Ascending aorta (tissue), 2 donors: ENCODE measurements at regions of chr1 and their contacts with region 1.

Region 1: DNA sequence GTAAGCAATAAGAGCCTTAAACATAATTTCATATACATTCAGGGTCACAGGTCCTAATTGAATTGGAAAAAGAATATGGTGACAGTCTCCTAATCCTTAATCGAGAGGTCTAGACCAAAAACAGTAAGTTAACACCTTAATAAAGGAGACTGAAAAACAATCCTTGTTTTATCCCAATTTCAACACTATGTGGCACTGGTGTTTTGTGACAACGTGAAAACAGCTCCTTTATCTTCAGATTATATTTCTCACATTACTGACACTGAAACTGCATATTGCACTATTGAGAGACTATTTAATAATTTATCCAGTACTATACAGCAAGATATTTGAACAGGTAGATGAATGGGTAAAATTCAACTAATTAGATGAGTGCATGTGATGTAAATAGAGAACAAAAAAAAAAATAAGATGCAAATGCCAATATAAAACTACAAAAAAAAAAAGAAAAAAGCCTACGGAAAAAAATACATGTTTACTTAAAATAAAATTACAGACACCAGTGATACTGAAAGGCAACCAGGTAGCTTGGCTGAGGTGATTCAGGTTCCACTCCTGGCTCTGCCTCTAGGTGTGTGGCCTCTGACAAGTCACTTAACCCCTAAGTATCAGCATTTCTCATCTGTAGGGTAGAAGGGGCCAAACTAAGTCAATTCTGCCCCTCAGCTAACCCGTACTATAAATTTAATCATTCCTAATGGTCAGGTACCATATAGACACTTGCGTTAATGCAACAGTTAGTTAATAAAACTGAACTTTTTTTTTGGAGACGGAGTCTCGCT is 33.9 kb downstream of the TP53BP2 start:
- DNase-seq: no peak
- H3K4me3 ChIP-seq: no peak overlapping the region
- H3K27ac ChIP-seq: no peak overlapping the region
- H3K4me1 ChIP-seq: peaks cover 0 to 8% of the 10 kb centered on the region in 2 donors
- H3K27me3 ChIP-seq: no peaks in the 10 kb centered on the region
- CTCF ChIP-seq: peak; percentile 37 to 61 (median 57)

Region 2: GRCh38 chr1:223726380-223727001 is 85.3 kb before region 1 on chr1:
- intact Hi-C with region 1: no loop called
- DNase-seq: peak; percentile 57 to 89
- H3K4me3 ChIP-seq: no peak overlapping the region
- H3K27ac ChIP-seq: peak overlapping the region; percentile 69 to 70
- H3K4me1 ChIP-seq: peaks cover 5 to 31% of the 10 kb centered on the region in 2 donors
- H3K27me3 ChIP-seq: no peaks in the 10 kb centered on the region
- CTCF ChIP-seq: no peak

Region 3: DNA sequence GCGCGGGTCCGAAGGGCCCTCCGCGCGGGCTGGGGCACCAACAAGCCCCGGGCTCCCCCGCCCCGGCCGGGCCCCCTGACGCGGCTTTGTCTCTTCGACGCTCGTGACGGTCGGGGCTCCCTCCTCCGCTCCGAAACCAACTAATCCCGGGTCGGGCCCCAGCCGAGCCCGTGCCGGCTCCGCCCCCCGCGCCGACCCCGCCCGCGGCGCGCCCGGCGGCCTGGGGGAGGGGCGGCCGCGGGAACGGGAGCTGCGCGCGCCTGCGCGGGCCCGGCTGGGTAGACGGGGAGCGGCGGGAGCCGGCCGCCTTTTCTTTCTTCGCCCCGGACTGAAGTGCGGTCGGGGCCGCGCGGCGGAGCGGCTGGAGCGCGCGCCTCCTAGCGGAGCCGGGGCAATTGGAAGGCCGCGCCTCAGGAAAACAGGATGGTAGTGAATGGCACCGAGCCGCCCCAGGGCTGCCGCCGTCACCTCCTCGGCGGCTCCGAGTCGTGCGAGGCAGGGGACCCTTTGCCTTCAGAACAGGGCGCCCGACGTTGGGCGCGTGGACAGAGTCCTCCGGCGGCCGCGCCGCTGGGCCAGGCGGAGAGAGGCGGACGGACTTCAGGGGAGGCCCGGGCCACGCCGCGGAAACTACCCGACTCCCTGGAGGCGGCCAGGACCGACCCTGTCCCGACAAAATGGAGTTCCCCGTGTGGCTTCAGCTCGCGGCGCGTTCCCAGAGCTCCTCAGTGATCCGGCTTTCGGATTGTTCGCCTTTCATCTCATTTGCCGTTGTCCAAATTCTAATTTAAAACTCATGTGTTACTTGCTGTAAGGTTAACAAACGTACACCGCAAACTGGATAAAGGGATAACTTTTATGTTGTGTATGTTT is 34.2 kb after region 1 on chr1 and contains the start of gene TP53BP2:
- intact Hi-C with region 1: loop called (anchors 5 kb)
- DNase-seq: peak; percentile 43 to 92
- H3K4me3 ChIP-seq: peak within 1 kb of the TSS; percentile 93 to 95
- H3K27ac ChIP-seq: peak within 1 kb of the TSS; percentile 100
- H3K4me1 ChIP-seq: peaks cover 2 to 22% of the 10 kb centered on the region in 2 donors
- H3K27me3 ChIP-seq: no peaks in the 10 kb centered on the region
- CTCF ChIP-seq: peak; percentile 54 to 87 (median 84)
- total RNA-seq, gene TP53BP2: 162 TPM